Vagina (tissue), 2 donors: ENCODE measurements at regions of chr11 and their contacts with region 1.

Region 1: GRCh38 chr11:46392421-46393230 is 1.1 kb upstream of the CHRM4 start:
- DNase-seq: no peak
- H3K4me3 ChIP-seq: peak overlapping the region; percentile 22 to 31
- H3K27ac ChIP-seq: no peak overlapping the region
- H3K4me1 ChIP-seq: peaks cover 38% of the 10 kb centered on the region
- H3K27me3 ChIP-seq: peaks cover 13% of the 10 kb centered on the region
- CTCF ChIP-seq: no peak
- POLR2A ChIP-seq: no peak

Region 2: DNA sequence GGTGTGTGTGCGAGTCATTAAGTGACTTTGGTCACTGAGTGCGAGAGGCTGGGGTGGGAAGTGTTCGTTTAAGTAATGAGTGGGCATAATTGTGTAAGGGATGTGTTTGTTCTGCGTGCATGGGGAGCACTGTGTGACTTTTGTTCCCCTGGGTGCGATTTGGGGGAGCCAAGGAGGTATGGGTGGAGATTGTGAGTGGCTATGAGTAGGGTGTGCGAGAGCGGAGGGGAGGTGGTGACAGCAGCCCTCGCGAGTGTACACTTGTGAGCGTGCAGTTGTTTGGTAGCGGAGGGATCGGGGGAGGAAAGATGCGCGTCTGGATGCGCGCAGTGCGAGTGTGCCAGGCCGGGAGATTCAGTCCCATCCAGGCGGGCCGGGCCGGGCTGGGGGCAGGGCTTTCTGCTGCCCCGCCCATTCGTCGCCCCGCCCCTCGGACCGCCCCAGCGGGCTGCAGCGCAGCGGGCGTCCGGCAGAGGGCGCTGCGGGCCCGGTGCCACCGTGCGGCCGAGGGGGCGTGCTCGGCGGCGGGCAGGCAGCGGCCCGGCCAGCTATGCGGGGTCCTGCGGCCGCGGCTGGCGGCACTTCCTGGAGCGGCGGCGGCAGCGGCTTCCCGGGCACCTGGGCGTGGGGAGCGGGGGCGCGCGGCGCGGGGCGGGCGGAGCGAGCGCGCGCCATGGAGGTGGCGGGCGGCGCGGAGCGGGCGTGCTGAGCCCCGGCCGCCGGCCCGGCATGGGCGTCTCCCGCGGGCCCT is 45.6 kb before region 1 on chr11 and contains the start of gene DGKZ:
- intact Hi-C with region 1: no loop called
- DNase-seq: no peak
- H3K4me3 ChIP-seq: peak within 1 kb of the TSS; percentile 75 to 92
- H3K27ac ChIP-seq: peak within 1 kb of the TSS; percentile 76
- H3K4me1 ChIP-seq: peaks cover 60% of the 10 kb centered on the region
- H3K27me3 ChIP-seq: no peaks in the 10 kb centered on the region
- CTCF ChIP-seq: peak; percentile 55 to 60 (median 57)
- POLR2A ChIP-seq: no peak
- total RNA-seq, gene DGKZ: 78.8 TPM

Region 3: DNA sequence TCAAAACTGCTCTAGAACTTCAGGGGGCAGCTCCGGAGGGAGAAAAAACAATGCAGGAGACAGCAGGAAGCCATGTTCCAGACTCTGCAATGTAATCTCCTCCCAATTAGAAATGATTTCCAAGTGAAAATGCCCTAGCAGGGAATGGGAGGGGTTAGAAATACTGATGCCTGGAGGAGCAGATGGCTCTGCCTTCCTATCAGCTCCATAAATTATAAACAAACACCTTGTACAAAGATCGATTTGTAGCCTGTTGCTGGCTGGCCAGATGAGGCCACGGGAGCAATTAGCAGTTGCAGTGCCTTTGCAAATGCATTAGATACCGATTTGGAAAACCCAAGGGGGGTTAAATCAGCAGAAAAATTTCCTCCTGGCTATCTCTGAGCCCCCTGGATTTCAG is 45.6 kb after region 1 on chr11:
- intact Hi-C with region 1: no loop called
- DNase-seq: no peak
- H3K4me3 ChIP-seq: no peak overlapping the region
- H3K27ac ChIP-seq: no peak overlapping the region
- H3K4me1 ChIP-seq: no peaks in the 10 kb centered on the region
- H3K27me3 ChIP-seq: no peaks in the 10 kb centered on the region
- CTCF ChIP-seq: no peak
- POLR2A ChIP-seq: no peak

Region 4: DNA sequence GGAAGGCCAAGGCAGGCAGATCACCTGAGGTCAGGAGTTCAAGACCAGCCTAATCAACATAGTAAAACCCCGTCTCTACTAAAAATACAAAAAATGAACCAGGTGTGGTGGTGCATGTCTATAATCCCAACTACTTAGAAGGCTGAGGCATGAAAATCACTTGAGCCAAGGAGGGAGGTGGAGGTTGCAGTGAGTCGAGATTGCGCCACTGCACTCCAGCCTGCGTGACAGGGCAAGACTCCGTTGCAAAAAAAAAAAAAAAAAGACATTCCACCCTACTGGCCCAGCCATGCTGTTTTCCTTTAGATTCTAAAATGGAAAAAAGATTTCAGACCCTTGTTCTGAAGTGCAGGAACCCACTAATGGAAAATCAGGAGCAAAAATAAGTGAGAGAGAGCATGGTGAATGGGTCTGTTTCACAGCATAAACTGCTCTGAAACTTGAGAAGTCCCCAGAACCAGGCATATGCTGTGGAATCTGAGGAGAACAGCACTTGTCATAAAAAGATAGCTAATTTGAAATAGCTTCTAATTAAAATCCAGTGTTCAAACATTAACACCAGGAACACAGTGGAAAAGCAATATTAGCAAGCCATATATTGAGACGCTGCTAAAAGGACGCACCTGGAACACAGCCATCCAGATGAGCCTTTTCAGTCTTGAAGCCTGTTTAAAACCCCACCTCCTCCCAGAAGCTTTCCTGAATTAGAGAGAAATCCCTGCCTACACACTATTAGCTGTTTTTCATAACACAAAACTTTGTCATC is 65.2 kb after region 1 on chr11:
- intact Hi-C with region 1: no loop called
- DNase-seq: no peak
- H3K4me3 ChIP-seq: no peak overlapping the region
- H3K27ac ChIP-seq: no peak overlapping the region
- H3K4me1 ChIP-seq: peaks cover 9% of the 10 kb centered on the region
- H3K27me3 ChIP-seq: no peaks in the 10 kb centered on the region
- CTCF ChIP-seq: no peak
- POLR2A ChIP-seq: no peak

Region 5: DNA sequence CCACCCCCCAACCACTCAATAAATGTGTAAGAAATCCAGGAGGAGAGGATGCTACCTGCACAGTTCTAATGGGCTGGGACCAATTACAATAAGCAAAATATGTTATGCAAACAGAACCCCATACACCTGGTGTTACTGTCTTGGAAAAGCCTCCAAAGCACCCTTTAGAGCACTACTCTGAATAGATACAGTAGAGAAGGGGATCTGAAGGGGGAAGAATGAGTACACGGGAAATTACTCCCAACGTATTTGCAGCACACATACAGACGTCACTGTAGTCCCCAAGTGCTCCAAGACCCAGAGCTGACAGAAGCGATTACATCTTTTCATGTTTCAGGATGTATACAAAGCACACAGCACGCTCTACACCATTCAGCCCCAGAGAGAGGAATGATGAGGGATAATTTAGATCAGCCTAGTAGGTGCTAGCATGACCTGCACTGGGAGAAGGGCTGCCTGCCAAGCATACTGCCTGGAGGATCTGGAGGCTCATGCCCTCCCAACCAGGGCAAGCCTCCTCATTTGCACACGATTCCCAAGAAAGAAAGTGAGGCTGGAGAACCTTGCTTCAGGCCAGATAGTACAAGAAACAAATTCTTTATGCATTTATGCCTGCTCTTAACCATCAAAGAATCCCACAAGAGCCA is 137.4 kb after region 1 on chr11:
- intact Hi-C with region 1: loop called (anchors 5 kb)
- DNase-seq: no peak
- H3K4me3 ChIP-seq: no peak overlapping the region
- H3K27ac ChIP-seq: no peak overlapping the region
- H3K4me1 ChIP-seq: peaks cover 16% of the 10 kb centered on the region
- H3K27me3 ChIP-seq: no peaks in the 10 kb centered on the region
- CTCF ChIP-seq: no peak
- POLR2A ChIP-seq: no peak

Region 6: DNA sequence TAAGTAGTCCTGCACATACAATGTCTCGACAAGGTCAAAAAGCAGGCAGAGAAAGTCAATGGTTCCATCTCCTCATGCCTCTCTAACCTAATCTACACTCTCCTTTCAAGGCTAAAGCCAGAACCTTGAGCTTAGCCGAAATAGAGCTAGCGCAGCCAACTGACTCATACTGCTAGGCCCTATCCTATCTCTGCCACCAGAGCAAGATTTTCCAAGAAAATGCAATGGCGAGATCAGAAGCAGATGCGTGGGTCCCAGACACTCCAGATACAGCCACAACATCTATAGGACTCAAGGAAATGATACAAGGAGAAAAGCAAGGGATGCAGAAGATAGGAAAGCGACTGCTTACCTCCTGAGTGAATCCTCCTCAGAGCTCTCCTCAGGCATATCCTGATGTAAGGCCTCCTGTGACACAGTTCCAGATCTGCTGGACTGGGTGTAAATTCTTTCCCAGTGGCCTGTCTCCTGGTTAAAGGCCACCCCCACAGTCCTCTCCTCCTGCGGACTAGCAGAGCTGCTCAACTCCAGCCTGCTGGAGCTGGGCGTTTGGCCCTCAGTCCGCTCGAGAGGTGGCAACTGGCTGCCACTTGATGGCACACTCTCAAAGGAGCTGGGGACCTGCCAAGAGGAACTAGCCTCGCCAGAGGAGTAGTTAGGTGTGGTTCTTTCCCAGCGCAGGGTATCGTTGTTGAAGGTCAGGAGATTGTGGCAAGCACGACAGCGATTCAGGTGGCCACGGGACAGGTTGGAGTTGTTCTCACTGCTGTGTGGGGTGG is 149.2 kb after region 1 on chr11:
- intact Hi-C with region 1: loop called (anchors 5 kb)
- DNase-seq: no peak
- H3K4me3 ChIP-seq: no peak overlapping the region
- H3K27ac ChIP-seq: no peak overlapping the region
- H3K4me1 ChIP-seq: peaks cover 9% of the 10 kb centered on the region
- H3K27me3 ChIP-seq: no peaks in the 10 kb centered on the region
- CTCF ChIP-seq: no peak
- POLR2A ChIP-seq: no peak

Region 7: GRCh38 chr11:46616998-46617675 is 224.5 kb after region 1 on chr11 and contains the starts of genes ATG13 and HARBI1:
- intact Hi-C with region 1: loop called (anchors 10 kb)
- DNase-seq: peak in 1 of 2 donors; percentile 89
- H3K4me3 ChIP-seq: peak within 1 kb of the TSS; percentile 73 to 89
- H3K27ac ChIP-seq: peak within 1 kb of the TSS; percentile 89
- H3K4me1 ChIP-seq: peaks cover 30% of the 10 kb centered on the region
- H3K27me3 ChIP-seq: no peaks in the 10 kb centered on the region
- CTCF ChIP-seq: no peak
- POLR2A ChIP-seq: peak in 1 of 2 donors; percentile 15
- total RNA-seq, gene ATG13: 39.0 TPM
- total RNA-seq, gene HARBI1: 1.5 TPM